Activated naive CD4-positive, alpha-beta T cell treated with anti-CD3 and anti-CD28 coated beads, Interleukin-2, amount 10 ng/mL, durations not matched to agents 7 days and 5 days (primary cell): ENCODE measurements at regions of chr11 and their contacts with region 1.

Region 1: DNA sequence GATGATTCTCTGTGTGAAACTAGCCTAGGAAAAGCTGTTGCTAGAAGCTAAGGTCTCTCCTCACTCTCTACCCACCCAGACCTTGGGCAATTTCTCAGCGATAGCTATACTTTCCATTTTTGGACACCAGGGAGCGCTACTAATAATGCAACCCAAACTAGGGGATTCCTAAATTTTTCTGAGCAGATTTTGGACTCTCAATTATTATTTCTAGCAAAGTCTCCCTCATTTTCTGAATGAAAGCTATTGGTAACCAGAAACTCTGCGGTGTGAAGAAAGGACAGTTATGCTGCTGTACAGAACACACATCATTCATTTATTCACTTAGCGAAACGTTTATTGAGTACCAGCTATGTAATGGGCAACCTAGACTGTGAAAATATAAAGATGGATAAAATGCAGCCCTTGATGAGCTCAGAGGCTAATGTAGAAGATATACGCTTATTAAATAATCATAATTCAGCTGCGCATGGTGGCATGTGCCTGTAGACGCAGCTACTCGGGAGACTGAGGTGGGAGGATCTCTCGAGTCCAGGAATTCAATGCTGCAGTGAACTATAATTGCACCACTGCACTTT is 6.1 kb upstream of the STIM1 start:
- DNase-seq: peak; percentile 51
- H3K4me3 Mint-ChIP-seq: no peak overlapping the region
- H3K27ac Mint-ChIP-seq: no peak overlapping the region
- H3K4me1 Mint-ChIP-seq: peaks cover 42% of the 10 kb centered on the region
- H3K27me3 Mint-ChIP-seq: peaks cover 4% of the 10 kb centered on the region

Region 2: GRCh38 chr11:3834664-3835461 is 14.5 kb before region 1 on chr11:
- CTCF ChIA-PET with region 1: interaction called, 179 read pairs
- DNase-seq: peak; percentile 33
- H3K4me3 Mint-ChIP-seq: peak overlapping the region; percentile 88
- H3K27ac Mint-ChIP-seq: peak overlapping the region; percentile 74
- H3K4me1 Mint-ChIP-seq: peaks cover 84% of the 10 kb centered on the region
- H3K27me3 Mint-ChIP-seq: no peaks in the 10 kb centered on the region

Region 3: GRCh38 chr11:3927133-3927796 is 77.9 kb after region 1 on chr11:
- CTCF ChIA-PET with region 1: interaction called, 17 read pairs
- DNase-seq: no peak
- H3K4me3 Mint-ChIP-seq: no peak overlapping the region
- H3K27ac Mint-ChIP-seq: no peak overlapping the region
- H3K4me1 Mint-ChIP-seq: peaks cover 10% of the 10 kb centered on the region
- H3K27me3 Mint-ChIP-seq: no peaks in the 10 kb centered on the region

Region 4: GRCh38 chr11:3947061-3947460 is 97.7 kb after region 1 on chr11:
- CTCF ChIA-PET with region 1: interaction called, 26 read pairs
- DNase-seq: peak; percentile 72
- H3K4me3 Mint-ChIP-seq: peak overlapping the region; percentile 72
- H3K27ac Mint-ChIP-seq: peak overlapping the region; percentile 98
- H3K4me1 Mint-ChIP-seq: peaks cover 95% of the 10 kb centered on the region
- H3K27me3 Mint-ChIP-seq: no peaks in the 10 kb centered on the region

Region 5: GRCh38 chr11:3984896-3985295 is 135.5 kb after region 1 on chr11:
- CTCF ChIA-PET with region 1: interaction called, 43 read pairs
- DNase-seq: peak; percentile 60
- H3K4me3 Mint-ChIP-seq: no peak overlapping the region
- H3K27ac Mint-ChIP-seq: no peak overlapping the region
- H3K4me1 Mint-ChIP-seq: peaks cover 74% of the 10 kb centered on the region
- H3K27me3 Mint-ChIP-seq: no peaks in the 10 kb centered on the region

Region 6: DNA sequence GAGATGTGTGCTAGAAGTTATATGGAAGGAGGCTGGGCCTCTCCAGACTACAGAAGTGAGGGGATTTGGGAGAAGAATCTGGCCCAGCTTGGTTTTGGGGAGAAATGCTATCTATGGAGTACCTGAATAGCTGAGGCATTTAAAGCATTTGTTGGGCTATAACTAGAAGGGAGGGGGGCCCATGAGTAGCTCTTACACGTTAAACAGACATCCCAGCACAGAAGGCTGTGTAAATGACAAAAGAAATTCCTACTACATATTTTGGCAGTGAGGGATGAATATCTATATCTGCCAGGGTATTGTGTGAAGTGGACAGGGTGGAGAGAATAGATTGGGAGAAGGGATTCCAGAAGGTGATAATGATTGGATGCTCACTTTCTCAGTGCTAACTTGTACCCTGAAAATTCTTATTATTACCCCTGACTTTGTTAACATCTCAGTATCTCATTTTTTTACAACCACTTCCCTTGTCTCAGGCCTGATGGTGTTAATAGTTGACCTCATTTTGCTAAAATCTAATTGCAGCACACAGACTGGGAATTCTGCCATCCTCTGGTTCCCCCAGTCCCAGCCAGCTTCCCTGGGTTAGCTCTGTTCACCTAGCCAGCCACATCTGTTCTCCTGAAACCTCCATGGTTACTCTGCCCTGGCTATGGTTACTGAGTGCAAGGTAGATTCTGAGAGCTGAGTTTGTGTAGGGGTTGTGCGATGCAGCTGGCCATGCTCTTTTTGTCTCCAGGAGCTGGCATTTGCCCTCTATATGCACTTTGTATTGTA is 216.4 kb after region 1 on chr11:
- CTCF ChIA-PET with region 1: interaction called, 195 read pairs
- DNase-seq: no peak
- H3K4me3 Mint-ChIP-seq: no peak overlapping the region
- H3K27ac Mint-ChIP-seq: no peak overlapping the region
- H3K4me1 Mint-ChIP-seq: peaks cover 35% of the 10 kb centered on the region
- H3K27me3 Mint-ChIP-seq: no peaks in the 10 kb centered on the region